Posterior cingulate gyrus (tissue), 11 donors: ENCODE measurements at regions of chr6 and their contacts with region 1.

Region 1: DNA sequence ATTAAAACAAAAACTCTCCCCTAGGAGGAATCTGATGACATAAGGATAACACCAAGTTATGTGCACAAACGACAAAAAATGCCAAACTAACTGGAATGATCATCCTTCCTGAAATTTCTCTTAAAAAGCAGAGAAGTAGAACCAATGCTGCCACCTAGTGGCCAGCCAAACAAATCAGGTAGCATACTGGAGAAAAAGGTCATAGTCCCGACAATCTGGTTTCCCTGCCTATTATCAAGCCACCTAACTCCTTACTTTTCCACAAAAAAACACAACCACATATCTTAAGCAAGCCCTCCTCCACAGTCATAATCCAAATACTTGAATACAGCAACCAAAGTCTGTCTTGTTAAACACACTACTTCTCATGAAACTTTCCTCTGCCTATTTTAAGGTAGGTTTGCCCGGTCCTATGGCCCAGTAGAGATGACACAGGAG is 5.3 kb downstream of the OARD1 start:
- DNase-seq: peak in 9 of 10 donors; percentile 39 to 90 (median 73)

Region 2: DNA sequence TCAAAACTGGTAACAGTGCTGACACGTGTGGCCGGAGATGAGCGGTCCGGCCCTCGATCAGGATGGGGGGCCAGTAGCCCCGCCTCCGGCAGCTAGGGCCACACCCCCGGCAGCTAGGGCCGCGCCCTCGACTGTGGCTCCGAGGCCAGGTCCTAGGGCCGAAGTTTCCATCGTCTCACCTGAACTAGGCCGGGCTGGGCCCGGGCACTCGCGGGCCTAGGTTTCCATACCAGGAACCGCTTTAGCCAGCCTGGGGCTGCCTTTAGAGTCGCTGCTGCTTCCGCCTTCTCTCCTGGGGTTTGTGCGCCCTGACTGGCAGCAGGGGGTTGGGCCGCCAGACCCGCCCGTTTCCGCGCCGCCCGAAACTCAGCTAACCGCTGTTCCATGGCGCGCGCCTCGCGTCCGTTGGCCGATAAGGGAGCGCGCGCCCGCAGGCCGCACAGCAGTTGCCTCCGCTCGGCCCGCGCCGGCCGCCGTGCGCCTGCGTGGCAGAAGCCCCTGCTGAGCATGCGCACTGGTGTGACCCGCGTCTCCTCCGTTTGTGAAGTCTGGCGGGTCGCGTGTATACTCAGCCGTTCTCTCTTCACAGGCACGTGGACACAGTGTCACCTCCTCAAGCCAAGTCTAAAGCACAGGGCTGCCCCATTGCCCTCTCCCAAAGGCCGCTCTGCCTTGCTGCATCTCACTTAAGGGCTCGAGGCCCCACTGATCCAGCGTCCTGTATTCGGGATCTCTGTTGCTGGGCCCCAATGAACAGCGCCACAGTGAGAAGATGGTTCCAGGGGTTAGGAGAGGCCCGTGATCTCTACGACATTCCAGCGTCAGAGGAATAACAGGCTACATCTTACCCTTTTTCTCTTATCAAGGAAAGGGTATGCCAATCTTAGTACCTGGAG is 1951.9 kb before region 1 on chr6 and contains the start of gene SAYSD1:
- intact Hi-C with region 1: loop called (anchors 10 kb)
- DNase-seq: peak; percentile 81 to 98 (median 89)

Region 3: DNA sequence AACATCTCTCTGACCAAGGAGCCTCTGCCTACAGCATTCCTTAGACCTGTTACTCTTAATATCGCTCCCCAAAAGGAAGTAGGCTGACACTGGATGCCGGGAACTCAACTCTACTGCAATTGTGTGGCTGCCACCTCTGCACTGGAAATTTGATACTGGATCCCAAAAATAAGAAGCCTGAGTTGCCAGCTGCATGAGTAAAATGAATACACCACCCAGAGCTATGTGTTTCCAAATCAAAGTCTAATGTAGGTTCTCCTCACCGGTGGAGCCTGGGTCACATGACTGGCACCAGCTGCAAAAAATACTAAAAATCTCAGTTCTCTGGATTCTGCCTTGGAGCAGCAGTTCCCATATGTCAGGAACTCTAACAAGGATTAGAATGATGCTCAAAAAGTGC is 64.7 kb before region 1 on chr6:
- intact Hi-C with region 1: loop called (anchors 2 kb)
- DNase-seq: no peak

Region 4: DNA sequence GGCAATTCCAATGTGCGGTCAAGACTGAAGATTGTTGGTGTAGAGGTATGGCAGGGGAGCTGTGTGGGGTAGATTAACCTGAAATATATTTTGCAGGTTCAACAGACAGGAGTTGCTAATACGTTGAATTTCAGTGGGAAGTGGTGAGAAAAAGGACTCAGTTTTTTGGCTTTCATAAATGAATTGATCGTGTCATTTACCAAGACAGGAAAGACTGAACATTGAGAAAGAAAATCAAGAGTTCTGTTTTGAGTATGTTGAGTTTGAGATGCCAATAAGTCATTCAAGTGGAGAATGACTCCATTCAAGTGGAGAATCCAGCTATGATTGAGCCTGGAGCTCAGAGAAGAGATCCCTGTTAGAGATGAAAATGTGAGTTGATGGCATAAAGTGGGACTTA is 37.0 kb after region 1 on chr6:
- intact Hi-C with region 1: no loop called
- DNase-seq: no peak